ENCODE measurements at regions of chr11 and their contacts with region 1.

Region 1: DNA sequence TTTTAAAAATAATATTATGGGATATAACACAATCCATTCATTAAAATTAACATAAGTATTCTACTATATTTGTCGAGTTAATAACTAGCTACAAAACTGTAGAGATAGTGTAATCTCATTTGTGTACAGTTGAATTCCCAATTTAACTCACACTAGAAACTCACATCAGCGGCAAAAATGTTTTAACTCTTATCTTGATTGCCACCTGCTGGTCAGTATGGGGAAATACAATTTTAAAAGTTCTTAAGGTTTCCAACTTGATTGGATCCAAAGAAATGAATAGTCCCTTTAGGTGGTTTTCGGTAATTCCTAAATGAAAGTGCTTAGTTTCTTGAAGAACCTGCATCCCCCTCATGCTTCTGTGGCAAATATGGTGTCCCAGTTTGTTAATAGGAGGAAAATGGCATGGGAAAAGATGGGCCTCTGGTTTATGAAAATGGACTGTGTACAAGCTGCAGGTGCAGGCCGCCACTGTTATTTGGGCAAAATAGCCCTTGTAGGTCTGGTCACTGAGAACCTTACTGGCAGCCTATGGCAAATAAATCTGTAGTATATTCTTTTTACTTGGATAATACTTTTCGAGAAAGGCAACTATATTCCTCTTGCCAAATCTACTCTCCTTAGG is 33.7 kb upstream of the SLC17A6 start:
- DNase-seq: peak; percentile 21 to 52
- ATAC-seq: peak; percentile 34 to 68; a peak in 4 of 6 replicates
- H3K4me3 ChIP-seq: no peak overlapping the region
- H3K27ac ChIP-seq: no peak overlapping the region
- H3K4me1 ChIP-seq: no peaks in the 10 kb centered on the region
- CTCF ChIP-seq: peak; percentile 69
- EP300 ChIP-seq: no peak
- POLR2A ChIP-seq: no peak
- RAD21 ChIP-seq: peak; percentile 66 to 71

Region 2: DNA sequence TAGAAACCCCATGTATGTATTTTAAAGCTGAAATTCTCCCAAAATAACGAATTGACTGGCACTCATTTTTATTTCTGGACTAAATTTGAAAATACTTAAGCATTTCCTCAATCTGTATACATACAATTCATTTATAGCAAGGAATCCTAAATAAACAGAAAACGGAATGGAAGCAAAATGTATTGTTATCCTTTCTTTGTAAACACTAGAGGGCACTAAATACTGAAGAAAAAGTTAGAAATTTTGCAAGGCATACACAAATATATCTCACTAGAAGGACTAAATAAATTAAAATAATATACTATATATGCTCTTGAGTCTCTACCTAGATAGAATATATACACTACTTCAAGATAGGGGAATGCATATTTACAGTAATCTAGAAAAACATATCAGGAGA is 134.6 kb before region 1 on chr11:
- CTCF ChIA-PET with region 1: interaction called, 41 read pairs
- POLR2A ChIA-PET with region 1: no interaction called
- DNase-seq: peak in 1 of 2 experiments; percentile 13
- ATAC-seq: peak in 1 of 2 experiments; percentile 61; a peak in 2 of 6 replicates
- H3K4me3 ChIP-seq: no peak overlapping the region
- H3K27ac ChIP-seq: no peak overlapping the region
- H3K4me1 ChIP-seq: no peaks in the 10 kb centered on the region
- CTCF ChIP-seq: peak; percentile 49; the same call in 2 of the 3 replicates
- EP300 ChIP-seq: no peak
- POLR2A ChIP-seq: no peak
- RAD21 ChIP-seq: peak; percentile 61 to 69

Region 3: DNA sequence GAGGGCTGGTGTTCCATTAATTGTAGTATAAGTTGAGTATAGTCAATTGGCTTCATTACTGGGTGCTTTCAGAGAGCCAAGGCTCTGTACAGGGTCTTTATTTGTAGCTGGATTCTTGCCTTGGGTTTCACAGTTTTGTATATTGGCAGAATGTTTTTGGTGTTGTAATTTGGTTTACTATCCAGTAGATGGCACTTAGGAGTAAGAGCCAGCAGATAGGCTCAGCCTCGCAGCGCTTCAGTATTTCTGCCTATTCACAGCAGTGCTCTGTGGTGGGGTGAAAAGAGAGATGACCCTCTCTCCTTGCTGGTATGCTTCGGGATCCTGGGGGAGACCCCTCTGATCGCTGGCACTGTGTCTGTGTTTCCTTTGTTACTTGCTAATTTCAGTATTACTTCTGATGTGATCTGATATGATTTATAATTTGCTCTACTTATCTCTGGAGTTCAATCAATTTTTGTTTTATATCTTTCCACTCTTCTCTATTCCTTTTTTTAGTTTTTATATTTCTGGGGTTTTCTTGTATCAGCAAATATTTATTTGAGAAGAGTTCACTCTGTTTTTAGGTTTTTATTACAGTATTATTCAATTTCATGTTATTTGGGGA is 59.4 kb before region 1 on chr11:
- CTCF ChIA-PET with region 1: interaction called, 27 read pairs
- POLR2A ChIA-PET with region 1: no interaction called
- DNase-seq: peak; percentile 6 to 45
- ATAC-seq: peak; percentile 92 to 95
- H3K4me3 ChIP-seq: no peak overlapping the region
- H3K27ac ChIP-seq: no peak overlapping the region
- H3K4me1 ChIP-seq: no peaks in the 10 kb centered on the region
- CTCF ChIP-seq: peak; percentile 58
- EP300 ChIP-seq: no peak
- POLR2A ChIP-seq: no peak
- RAD21 ChIP-seq: peak; percentile 26 to 44; a peak in 3 of 5 replicates

Region 4: DNA sequence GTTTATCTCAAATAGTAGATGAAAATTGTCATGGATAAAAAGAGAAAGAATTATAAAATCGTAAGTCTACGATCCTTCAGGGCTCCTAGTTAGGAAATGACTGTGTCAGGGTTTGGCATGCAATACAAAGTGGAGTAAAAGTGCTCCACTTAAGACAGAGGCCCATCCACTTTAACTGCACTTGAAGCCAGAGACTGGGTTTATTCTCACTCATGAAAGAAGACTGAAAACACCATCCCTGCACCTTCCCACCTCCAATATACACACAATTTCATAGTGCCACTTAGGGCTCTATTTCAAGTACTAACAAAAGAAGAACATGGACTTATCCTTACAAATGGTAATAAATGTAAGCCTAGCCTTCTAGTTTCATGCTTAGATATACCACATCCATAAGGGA is 40.8 kb before region 1 on chr11:
- CTCF ChIA-PET with region 1: no interaction called
- POLR2A ChIA-PET with region 1: no interaction called
- DNase-seq: no peak
- ATAC-seq: no peak
- H3K4me3 ChIP-seq: no peak overlapping the region
- H3K27ac ChIP-seq: no peak overlapping the region
- H3K4me1 ChIP-seq: no peaks in the 10 kb centered on the region
- CTCF ChIP-seq: no peak
- EP300 ChIP-seq: no peak
- POLR2A ChIP-seq: no peak
- RAD21 ChIP-seq: no peak

Measured in A549 (cell line).